HEK293 (cell line): ENCODE measurements at regions of chr11 and their contacts with region 1.

Region 1: DNA sequence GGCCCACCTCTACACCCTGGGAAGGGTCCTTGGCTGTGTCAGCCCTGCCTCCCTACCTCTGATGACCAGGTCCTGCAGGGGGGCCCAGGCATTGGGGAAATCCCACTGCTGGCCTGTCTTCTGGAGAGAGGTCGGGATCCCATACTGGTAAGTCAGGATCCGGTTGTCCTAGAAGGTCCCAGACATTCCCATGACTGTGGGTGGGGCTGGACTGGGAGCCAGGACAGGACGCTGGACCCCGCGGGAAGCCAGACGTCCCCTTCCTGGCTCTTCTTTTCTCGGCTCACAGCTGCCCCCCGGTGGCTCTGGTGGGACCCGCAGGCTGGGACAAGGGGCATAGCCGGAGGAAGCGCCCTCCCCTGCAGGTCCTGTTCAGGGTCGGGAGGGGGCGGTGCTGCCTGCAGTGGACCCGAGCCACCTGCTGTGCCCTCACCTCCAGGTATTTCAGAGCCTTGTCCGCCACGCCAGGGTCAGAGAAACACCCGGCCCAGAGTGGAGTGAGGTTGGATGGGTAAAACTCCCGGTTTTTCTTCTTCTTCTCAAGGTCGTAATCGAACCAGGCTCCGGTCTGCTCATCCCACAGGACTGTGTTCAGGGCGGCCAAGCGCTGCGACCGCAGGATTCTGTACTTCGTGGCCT is 20.0 kb downstream of the TREH start:
- H3K4me3 ChIP-seq: no peak overlapping the region
- H3K27ac ChIP-seq: no peak overlapping the region
- H3K4me1 ChIP-seq: no peaks in the 10 kb centered on the region
- CTCF ChIP-seq: peak; percentile 82

Region 2: DNA sequence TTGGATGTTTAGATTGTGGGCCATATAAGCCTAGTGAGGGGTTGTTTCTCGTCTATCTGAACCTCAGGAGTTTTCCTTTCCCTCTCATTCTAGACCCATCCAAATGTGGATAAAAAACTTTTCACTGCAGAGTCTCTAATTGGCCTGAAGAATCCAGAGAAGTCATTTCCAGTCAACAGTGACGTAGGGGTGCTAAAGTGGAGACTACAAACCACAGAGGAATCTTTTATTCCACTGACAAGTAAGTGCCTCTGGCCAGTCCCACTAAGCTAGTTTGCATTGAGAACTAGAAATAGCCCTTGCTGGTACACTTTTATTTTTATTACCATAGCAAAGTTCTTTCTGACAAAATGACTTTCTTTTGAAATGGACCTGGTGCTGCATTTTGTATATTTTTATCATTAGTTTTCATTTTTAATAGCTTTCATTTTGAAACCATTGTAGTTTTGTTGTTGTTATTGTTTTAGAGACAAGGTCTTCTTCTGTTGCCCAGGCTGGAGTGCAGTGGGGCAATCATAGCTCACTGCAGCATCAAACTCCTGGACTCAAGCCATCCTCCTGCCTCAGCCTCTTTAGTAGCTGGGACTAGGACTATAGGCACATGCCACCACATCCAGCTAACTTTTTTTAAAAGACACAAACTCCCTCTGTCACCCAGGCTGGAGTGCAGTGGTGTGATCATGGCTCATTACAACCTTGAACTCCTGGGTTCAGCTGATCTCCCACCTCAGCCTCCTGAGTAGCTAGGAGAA is 66.6 kb before region 1 on chr11:
- CTCF ChIA-PET with region 1: interaction called, 43 read pairs
- POLR2A ChIA-PET with region 1: no interaction called
- H3K4me3 ChIP-seq: no peak overlapping the region
- H3K27ac ChIP-seq: no peak overlapping the region
- H3K4me1 ChIP-seq: no peaks in the 10 kb centered on the region
- CTCF ChIP-seq: no peak

Region 3: GRCh38 chr11:118605116-118605867 is 54.1 kb before region 1 on chr11:
- CTCF ChIA-PET with region 1: interaction called, 41 read pairs
- POLR2A ChIA-PET with region 1: interaction called, 3 read pairs
- H3K4me3 ChIP-seq: no peak overlapping the region
- H3K27ac ChIP-seq: no peak overlapping the region
- H3K4me1 ChIP-seq: no peaks in the 10 kb centered on the region
- CTCF ChIP-seq: no peak